ENCODE measurements at regions of chr17 and their contacts with region 1.

Region 1: DNA sequence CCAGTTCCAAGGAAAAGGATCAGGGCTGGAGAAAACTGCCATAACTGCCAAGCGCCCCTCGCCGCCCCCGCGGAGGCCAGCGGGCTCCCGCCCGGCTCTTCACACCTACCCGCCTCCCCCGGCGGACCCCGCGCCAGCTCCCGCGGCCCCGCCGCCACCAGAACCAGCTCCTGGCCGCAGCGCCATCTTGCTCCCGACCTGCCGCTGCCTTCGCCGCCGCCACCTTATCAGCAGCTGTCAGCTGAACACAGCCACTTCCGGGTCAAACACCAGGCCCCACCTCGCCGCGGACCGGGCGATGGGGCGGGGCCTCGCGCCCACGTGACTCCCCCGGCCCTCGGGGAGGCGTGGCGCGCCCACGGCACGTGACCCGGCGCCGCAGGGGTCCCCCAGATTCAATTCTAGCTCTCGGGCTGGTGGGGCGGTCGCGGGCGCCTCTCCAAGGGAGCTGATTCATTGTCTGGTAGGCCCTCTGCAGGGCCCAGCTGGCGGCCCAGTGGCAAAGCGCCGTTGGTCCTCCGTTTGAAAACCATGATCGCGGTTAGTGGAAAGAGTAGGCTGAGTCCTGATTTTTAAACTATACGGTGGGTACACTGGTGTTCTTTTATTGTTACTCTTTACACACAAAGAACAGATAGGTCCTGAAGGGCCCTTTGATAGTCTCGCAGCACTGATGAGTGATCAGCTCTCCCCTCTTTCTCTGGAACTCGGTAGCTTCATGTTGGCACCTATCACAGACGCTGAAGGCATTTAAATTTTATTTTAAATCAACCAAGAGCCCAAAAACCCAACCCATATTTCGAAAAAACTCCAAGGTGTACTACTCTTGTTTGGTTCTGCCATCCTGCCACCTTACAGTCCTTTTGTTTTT is at the start of gene SYNRG:
- DNase-seq: peak; percentile 94 to 96 (median 95)
- H3K4me3 ChIP-seq: peak within 1 kb of the TSS; percentile 48 to 85
- H3K4me3 Mint-ChIP-seq: peak within 1 kb of the TSS; percentile 81 to 95 (median 92)
- H3K27ac ChIP-seq: peak within 1 kb of the TSS; percentile 81
- H3K27ac Mint-ChIP-seq: peak within 1 kb of the TSS; percentile 90 to 97 (median 93)
- H3K4me1 ChIP-seq: peaks cover 38% of the 10 kb centered on the region
- H3K4me1 Mint-ChIP-seq: peaks cover 24 to 52% (median 33%) of the 10 kb centered on the region in 4 donors
- H3K27me3 ChIP-seq: no peaks in the 10 kb centered on the region
- H3K27me3 Mint-ChIP-seq: no peaks in the 10 kb centered on the region
- total RNA-seq, gene SYNRG: 135 to 148 TPM

Region 2: DNA sequence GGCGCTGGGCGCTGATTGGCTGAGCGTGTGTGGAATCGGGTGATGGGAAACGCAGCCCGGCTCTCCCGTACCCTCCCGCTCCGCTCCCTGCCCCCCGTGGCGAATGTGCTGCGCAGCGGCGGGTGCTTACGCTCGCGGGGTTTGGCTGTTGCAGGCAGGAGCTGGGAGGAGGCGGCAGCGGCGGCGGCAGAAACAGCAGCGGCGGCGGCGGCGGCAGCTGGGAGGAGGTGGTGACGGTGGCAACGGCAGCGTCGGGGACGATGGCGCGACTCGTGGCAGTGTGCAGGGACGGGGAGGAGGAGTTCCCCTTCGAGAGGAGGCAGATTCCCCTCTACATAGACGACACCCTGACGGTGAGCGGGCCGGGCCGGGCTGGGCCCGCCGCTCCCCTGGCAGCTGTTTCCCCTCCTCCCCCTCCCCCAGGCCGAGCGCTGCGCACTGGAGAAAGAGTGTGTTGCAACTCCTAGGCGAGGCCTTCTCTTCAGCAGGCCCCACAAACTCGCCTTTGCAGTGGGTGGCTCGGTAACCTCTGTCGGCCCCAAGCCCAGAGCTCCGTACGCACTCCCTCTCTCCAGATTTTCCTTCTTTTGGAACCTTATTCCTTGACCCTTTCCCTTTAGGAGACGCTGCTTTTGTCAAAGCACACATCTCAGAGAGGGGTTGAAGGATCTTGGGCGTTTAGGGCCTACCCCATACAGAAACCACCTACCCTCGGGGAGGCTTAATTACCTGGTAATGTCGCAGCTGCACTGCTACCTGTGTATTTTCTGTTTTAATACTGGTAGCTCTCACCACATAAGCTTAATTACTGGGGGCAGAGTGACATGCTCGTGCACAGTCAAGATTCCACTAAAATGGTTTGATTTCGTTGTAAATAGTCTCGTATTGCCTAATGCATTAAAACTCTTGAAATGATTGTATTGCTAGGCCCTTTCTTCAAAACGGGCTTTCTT is 1063.7 kb before region 1 on chr17:
- CTCF ChIA-PET with region 1: no interaction called
- POLR2A ChIA-PET with region 1: interaction called, 4 read pairs
- intact Hi-C with region 1: loop called (anchors 10 kb)
- DNase-seq: peak; percentile 97 to 99 (median 98)
- H3K4me3 ChIP-seq: peak overlapping the region; percentile 89 to 90
- H3K4me3 Mint-ChIP-seq: peak overlapping the region; percentile 88 to 97 (median 92)
- H3K27ac ChIP-seq: peak overlapping the region; percentile 82
- H3K27ac Mint-ChIP-seq: peak overlapping the region; percentile 92 to 98 (median 96)
- H3K4me1 ChIP-seq: peaks cover 59% of the 10 kb centered on the region
- H3K4me1 Mint-ChIP-seq: peaks cover 25 to 64% (median 40%) of the 10 kb centered on the region in 4 donors
- H3K27me3 ChIP-seq: no peaks in the 10 kb centered on the region
- H3K27me3 Mint-ChIP-seq: no peaks in the 10 kb centered on the region

Region 3: GRCh38 chr17:37358830-37359681 is 250.3 kb before region 1 on chr17:
- CTCF ChIA-PET with region 1: no interaction called
- POLR2A ChIA-PET with region 1: interaction called, 3 read pairs
- intact Hi-C with region 1: loop called (anchors 10 kb)
- DNase-seq: peak; percentile 86 to 94 (median 89)
- H3K4me3 ChIP-seq: peak overlapping the region; percentile 84 to 94
- H3K4me3 Mint-ChIP-seq: peak overlapping the region; percentile 87 to 93 (median 92)
- H3K27ac ChIP-seq: peak overlapping the region; percentile 53
- H3K27ac Mint-ChIP-seq: peak overlapping the region in 6 of 7 donors; percentile 57 to 94 (median 93)
- H3K4me1 ChIP-seq: peaks cover 17% of the 10 kb centered on the region
- H3K4me1 Mint-ChIP-seq: peaks cover 13 to 22% (median 17%) of the 10 kb centered on the region in 4 donors
- H3K27me3 ChIP-seq: no peaks in the 10 kb centered on the region
- H3K27me3 Mint-ChIP-seq: no peaks in the 10 kb centered on the region

Region 4: DNA sequence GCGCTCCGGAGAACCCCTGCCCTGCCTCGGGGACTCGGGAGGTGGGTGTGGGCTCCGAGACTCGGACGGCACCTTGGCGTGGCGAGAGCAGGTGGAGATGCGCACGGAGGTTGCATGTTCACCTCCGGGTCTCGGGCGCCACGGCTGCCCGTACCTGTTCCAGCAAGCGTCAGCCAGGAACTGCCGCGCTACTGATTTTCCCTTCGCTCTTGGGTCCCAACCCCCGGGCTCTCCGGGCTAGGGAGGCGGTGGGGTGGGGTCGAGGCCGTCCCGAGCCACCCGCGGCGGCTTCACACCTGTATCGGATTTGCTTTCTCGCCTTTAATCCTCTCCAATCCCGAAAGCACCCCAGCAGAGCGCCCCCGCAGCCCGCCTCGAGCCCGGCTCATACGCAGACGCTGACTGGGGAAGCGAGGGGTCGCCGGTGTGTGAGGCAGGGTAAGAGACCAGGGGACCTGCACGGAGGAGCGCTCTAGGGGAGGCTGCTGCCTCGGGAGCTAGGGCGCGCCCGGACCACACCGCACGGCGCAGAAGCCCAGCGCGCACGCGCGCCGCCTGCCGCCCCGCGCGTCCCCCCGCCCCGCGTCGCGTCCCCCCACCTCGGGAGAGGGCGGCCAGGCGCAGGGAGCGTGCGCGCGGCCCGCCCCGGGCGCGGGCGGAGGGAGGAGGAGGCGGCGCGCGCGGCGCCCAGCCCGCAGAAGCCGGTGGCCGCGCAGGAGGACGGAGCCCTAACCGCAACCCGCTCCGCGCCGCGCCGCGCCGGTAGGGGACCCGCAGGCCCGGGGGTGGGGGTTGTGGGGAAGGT is 120.0 kb before region 1 on chr17 and contains the start of gene DUSP14:
- CTCF ChIA-PET with region 1: no interaction called
- POLR2A ChIA-PET with region 1: interaction called, 5 read pairs
- intact Hi-C with region 1: loop called (anchors 2 kb)
- DNase-seq: peak; percentile 79 to 86 (median 84)
- H3K4me3 ChIP-seq: peak within 1 kb of the TSS; percentile 84 to 93
- H3K4me3 Mint-ChIP-seq: peak within 1 kb of the TSS; percentile 91 to 98 (median 95)
- H3K27ac ChIP-seq: peak within 1 kb of the TSS; percentile 56
- H3K27ac Mint-ChIP-seq: peak within 1 kb of the TSS; percentile 90 to 96 (median 93)
- H3K4me1 ChIP-seq: peaks cover 26% of the 10 kb centered on the region
- H3K4me1 Mint-ChIP-seq: peaks cover 20 to 31% (median 24%) of the 10 kb centered on the region in 4 donors
- H3K27me3 ChIP-seq: no peaks in the 10 kb centered on the region
- H3K27me3 Mint-ChIP-seq: no peaks in the 10 kb centered on the region
- total RNA-seq, gene DUSP14: 6.6 to 7.4 TPM

Region 5: GRCh38 chr17:37527249-37527851 is 82.1 kb before region 1 on chr17:
- CTCF ChIA-PET with region 1: interaction called, 8 read pairs
- POLR2A ChIA-PET with region 1: interaction called, 3 read pairs
- intact Hi-C with region 1: loop called (anchors 1 kb)
- DNase-seq: peak; percentile 25 to 50 (median 38)
- H3K4me3 ChIP-seq: no peak overlapping the region
- H3K4me3 Mint-ChIP-seq: no peak overlapping the region
- H3K27ac ChIP-seq: no peak overlapping the region
- H3K27ac Mint-ChIP-seq: peak overlapping the region in 6 of 7 donors; percentile 14 to 81 (median 65)
- H3K4me1 ChIP-seq: no peaks in the 10 kb centered on the region
- H3K4me1 Mint-ChIP-seq: peaks cover 0 to 9% (median 5%) of the 10 kb centered on the region in 4 donors
- H3K27me3 ChIP-seq: no peaks in the 10 kb centered on the region
- H3K27me3 Mint-ChIP-seq: no peaks in the 10 kb centered on the region

Region 6: DNA sequence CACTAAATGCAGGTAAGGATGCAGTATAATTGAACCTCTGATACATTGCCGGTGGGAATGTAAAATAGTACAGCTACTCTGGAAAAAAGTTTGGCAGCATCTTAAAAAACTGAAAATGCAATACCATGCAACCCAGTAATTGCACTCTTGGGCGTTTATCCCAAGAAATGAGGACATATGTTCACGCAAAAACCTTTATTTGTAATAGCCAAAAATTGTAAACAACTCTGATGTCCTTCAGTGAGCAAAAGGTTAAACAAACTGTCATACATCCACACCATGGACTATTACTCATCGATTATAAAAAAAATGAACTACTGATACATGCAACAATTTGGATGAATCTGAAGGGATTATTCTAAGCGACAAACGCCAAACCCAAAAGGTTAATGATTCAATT is 17.1 kb before region 1 on chr17:
- CTCF ChIA-PET with region 1: interaction called, 5 read pairs
- POLR2A ChIA-PET with region 1: interaction called, 13 read pairs
- intact Hi-C with region 1: loop called (anchors 2 kb)
- DNase-seq: no peak
- H3K4me3 ChIP-seq: no peak overlapping the region
- H3K4me3 Mint-ChIP-seq: peak overlapping the region in 3 of 8 donors; percentile 37 to 51 (median 44)
- H3K27ac ChIP-seq: no peak overlapping the region
- H3K27ac Mint-ChIP-seq: no peak overlapping the region
- H3K4me1 ChIP-seq: peaks cover 59% of the 10 kb centered on the region
- H3K4me1 Mint-ChIP-seq: peaks cover 43 to 84% (median 60%) of the 10 kb centered on the region in 4 donors
- H3K27me3 ChIP-seq: no peaks in the 10 kb centered on the region
- H3K27me3 Mint-ChIP-seq: no peaks in the 10 kb centered on the region

Region 7: GRCh38 chr17:37643118-37643766 is 33.8 kb after region 1 on chr17 and contains the start of gene DDX52:
- CTCF ChIA-PET with region 1: interaction called, 4 read pairs
- POLR2A ChIA-PET with region 1: interaction called, 8 read pairs
- intact Hi-C with region 1: loop called (anchors 1 kb)
- DNase-seq: peak; percentile 86 to 91 (median 88)
- H3K4me3 ChIP-seq: peak within 1 kb of the TSS; percentile 90 to 94
- H3K4me3 Mint-ChIP-seq: peak within 1 kb of the TSS; percentile 93 to 97 (median 96)
- H3K27ac ChIP-seq: peak within 1 kb of the TSS; percentile 84
- H3K27ac Mint-ChIP-seq: peak within 1 kb of the TSS; percentile 84 to 96 (median 95)
- H3K4me1 ChIP-seq: peaks cover 28% of the 10 kb centered on the region
- H3K4me1 Mint-ChIP-seq: peaks cover 25 to 42% (median 31%) of the 10 kb centered on the region in 4 donors
- H3K27me3 ChIP-seq: peaks cover 13% of the 10 kb centered on the region
- H3K27me3 Mint-ChIP-seq: peaks cover 19 to 27% of the 10 kb centered on the region in 2 donors
- total RNA-seq, gene DDX52: 25.7 to 26.5 TPM

Region 8: DNA sequence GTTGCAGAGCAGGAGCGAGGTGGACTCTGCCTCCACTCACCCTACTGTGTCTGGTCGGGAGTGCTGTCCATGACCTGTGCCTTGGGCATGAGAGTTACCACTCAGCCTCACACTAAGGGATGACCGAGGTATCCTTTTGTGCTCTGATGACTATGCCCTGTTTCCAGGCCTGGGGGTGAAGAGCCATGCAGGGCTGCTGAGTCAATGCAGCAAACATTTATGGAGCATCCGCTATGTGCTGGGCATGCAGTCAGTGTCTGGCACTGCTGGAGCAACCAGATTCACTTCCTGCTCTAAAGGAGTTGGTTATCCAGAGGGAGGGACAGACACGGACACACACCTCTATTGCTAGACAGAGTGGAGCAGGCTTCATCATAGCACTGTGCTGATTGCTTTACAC is 143.1 kb after region 1 on chr17:
- CTCF ChIA-PET with region 1: no interaction called
- POLR2A ChIA-PET with region 1: no interaction called
- intact Hi-C with region 1: no loop called
- DNase-seq: no peak
- H3K4me3 ChIP-seq: no peak overlapping the region
- H3K4me3 Mint-ChIP-seq: no peak overlapping the region
- H3K27ac ChIP-seq: no peak overlapping the region
- H3K27ac Mint-ChIP-seq: peak overlapping the region in 1 of 7 donors; percentile 31
- H3K4me1 ChIP-seq: no peaks in the 10 kb centered on the region
- H3K4me1 Mint-ChIP-seq: no peaks in the 10 kb centered on the region
- H3K27me3 ChIP-seq: no peaks in the 10 kb centered on the region
- H3K27me3 Mint-ChIP-seq: peaks cover 0 to 10% of the 10 kb centered on the region in 2 donors

Measured in CD4-positive, alpha-beta memory T cell (primary cell).